Activated CD4-positive, alpha-beta memory T cell treated with anti-CD3 and anti-CD28 coated beads for 36 hours (primary cell): ENCODE measurements at regions of chr6 and their contacts with region 1.

Region 1: DNA sequence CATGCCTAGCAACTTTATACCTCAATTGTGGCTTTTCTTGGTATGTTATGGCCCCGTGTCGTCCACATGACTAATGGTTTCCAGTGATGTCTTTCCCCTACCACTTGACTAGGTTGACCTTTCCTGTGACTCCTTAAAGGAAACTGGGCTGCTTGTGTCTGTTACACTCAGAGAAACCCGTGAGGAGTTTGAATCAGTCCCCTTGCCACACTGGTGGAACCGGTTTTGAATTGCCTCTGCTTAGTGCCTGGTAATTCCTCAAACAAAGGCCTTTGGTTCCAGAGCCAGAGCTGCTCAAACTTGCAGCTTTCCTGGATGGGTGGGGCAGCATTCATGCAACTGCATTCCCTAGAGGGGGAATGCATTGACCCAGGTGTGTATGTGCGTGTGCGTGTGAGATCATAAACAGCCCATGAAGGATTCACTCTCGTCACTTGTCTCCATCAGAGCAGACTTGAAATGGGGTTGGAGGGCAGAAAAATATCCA is 22.0 kb downstream of the ECT2L start:
- DNase-seq: peak; percentile 50
- H3K4me3 Mint-ChIP-seq: no peak overlapping the region
- H3K27ac Mint-ChIP-seq: peak overlapping the region; percentile 50
- H3K4me1 Mint-ChIP-seq: peaks cover 30% of the 10 kb centered on the region
- H3K27me3 Mint-ChIP-seq: peaks cover 3% of the 10 kb centered on the region

Region 2: GRCh38 chr6:138882369-138883017 is 64.6 kb after region 1 on chr6:
- CTCF ChIA-PET with region 1: interaction called, 3 read pairs
- POLR2A ChIA-PET with region 1: no interaction called
- intact Hi-C with region 1: loop called (anchors 2 kb)
- DNase-seq: peak; percentile 52
- H3K4me3 Mint-ChIP-seq: no peak overlapping the region
- H3K27ac Mint-ChIP-seq: peak overlapping the region; percentile 84
- H3K4me1 Mint-ChIP-seq: peaks cover 19% of the 10 kb centered on the region
- H3K27me3 Mint-ChIP-seq: no peaks in the 10 kb centered on the region

Region 3: GRCh38 chr6:138970856-138971425 is 153.1 kb after region 1 on chr6:
- CTCF ChIA-PET with region 1: interaction called, 4 read pairs
- POLR2A ChIA-PET with region 1: no interaction called
- intact Hi-C with region 1: loop called (anchors 5 kb)
- DNase-seq: peak; percentile 54
- H3K4me3 Mint-ChIP-seq: no peak overlapping the region
- H3K27ac Mint-ChIP-seq: peak overlapping the region; percentile 36
- H3K4me1 Mint-ChIP-seq: peaks cover 68% of the 10 kb centered on the region
- H3K27me3 Mint-ChIP-seq: no peaks in the 10 kb centered on the region

Region 4: DNA sequence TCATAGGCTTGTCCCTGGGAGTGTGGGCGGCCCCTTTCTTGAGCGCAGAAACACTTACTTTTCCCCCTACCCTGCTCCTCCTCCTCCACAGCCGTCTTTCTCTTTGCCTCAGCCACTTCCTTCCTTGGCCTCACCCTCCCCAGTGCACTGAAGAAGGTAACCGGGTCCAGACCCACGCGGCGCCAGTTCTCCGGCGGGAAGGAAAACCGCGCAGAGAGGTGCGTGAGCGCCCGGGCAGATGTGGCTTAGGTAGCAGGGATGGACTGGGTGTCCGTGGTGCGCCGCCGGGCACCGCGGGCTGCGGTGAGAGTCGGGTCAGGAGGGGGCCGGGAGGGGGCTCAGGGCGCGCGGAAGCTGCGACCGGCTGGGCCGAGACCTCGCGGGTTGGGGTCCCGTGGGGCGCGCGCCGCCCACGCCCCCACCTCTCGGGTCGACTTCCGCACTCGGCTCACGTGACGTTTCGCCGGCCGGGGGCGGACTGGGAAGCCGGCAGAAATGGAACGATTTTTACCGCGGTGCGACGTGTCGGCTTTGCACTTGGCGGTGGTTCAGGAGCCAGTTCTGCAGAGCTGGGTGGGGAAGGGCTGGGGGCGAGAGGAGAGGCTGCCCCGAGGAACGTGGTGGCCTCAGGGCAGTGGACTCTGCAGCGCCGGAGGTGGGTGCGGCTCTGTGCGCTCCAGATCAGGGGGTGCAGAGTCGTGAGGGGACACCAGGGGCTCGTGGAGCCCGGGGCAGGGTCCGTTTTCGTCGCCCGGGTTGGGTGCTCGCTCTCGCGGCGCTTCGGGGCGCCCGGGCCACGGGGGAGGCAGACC is 211.0 kb after region 1 on chr6 and contains the start of gene ABRACL:
- CTCF ChIA-PET with region 1: interaction called, 8 read pairs
- POLR2A ChIA-PET with region 1: no interaction called
- intact Hi-C with region 1: loop called (anchors 2 kb)
- DNase-seq: peak; percentile 91
- H3K4me3 Mint-ChIP-seq: no peak within 1 kb of the TSS
- H3K27ac Mint-ChIP-seq: no peak within 1 kb of the TSS
- H3K4me1 Mint-ChIP-seq: peaks cover 20% of the 10 kb centered on the region
- H3K27me3 Mint-ChIP-seq: no peaks in the 10 kb centered on the region
- total RNA-seq, gene ABRACL: 179 to 182 TPM

Region 5: DNA sequence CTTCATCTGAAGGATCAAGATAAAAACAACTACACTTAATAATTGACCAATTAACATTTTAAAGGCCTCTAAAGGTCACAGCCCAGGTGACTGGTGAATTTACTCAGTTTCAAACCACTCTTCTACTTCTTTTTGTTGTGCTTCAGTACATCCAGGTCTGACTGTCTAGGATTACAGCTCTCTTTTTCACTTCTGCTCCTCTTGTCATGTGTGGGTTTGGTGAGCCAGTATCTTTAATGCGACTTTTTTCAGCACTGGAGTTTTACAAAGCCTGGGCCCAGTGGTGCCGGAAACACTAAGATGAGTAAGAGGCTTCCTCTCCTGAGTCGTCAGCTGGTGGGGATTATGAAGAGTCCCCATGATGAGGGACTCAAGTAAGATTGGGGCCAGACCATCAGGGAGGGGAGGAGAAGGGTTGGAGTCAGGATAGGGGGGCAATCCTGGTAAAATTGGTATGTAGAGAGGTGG is 344.0 kb after region 1 on chr6:
- CTCF ChIA-PET with region 1: no interaction called
- POLR2A ChIA-PET with region 1: no interaction called
- intact Hi-C with region 1: loop called (anchors 5 kb)
- DNase-seq: peak; percentile 88
- H3K4me3 Mint-ChIP-seq: peak overlapping the region; percentile 61
- H3K27ac Mint-ChIP-seq: peak overlapping the region; percentile 96
- H3K4me1 Mint-ChIP-seq: peaks cover 92% of the 10 kb centered on the region
- H3K27me3 Mint-ChIP-seq: no peaks in the 10 kb centered on the region

Region 6: GRCh38 chr6:139369568-139370282 is 551.9 kb after region 1 on chr6:
- CTCF ChIA-PET with region 1: interaction called, 15 read pairs
- POLR2A ChIA-PET with region 1: no interaction called
- intact Hi-C with region 1: loop called (anchors 1 kb)
- DNase-seq: peak; percentile 14
- H3K4me3 Mint-ChIP-seq: peak overlapping the region; percentile 15
- H3K27ac Mint-ChIP-seq: peak overlapping the region; percentile 51
- H3K4me1 Mint-ChIP-seq: peaks cover 39% of the 10 kb centered on the region
- H3K27me3 Mint-ChIP-seq: no peaks in the 10 kb centered on the region